Activated T-helper 1 cell treated with anti-CD3 and anti-CD28 coated beads, Interleukin-12 subunit alpha, Interleukin-12 subunit beta, Interleukin-2, Interleukin-4 antibody, amounts not matched to agents 30 ng/mL and 10 ng/mL and 1 ng/mL, durations not matched to agents 14 hours and 24 hours and 36 hours (primary cell): ENCODE measurements at regions of chr6 and their contacts with region 1.

Region 1: GRCh38 chr6:110815217-110816109 is at the start of gene CDK19:
- DNase-seq: peak; percentile 97
- H3K4me3 Mint-ChIP-seq: peak within 1 kb of the TSS; percentile 97
- H3K27ac Mint-ChIP-seq: peak within 1 kb of the TSS; percentile 98
- H3K4me1 Mint-ChIP-seq: peaks cover 38% of the 10 kb centered on the region
- H3K27me3 Mint-ChIP-seq: no peaks in the 10 kb centered on the region
- total RNA-seq, gene CDK19: 12.4 and 13.7 TPM in 2 replicates

Region 2: GRCh38 chr6:110528101-110528929 is 287.1 kb before region 1 on chr6:
- intact Hi-C with region 1: loop called (anchors 2 kb)
- DNase-seq: peak; percentile 24
- H3K4me3 Mint-ChIP-seq: no peak overlapping the region
- H3K27ac Mint-ChIP-seq: no peak overlapping the region
- H3K4me1 Mint-ChIP-seq: peaks cover 9% of the 10 kb centered on the region
- H3K27me3 Mint-ChIP-seq: peaks cover 8% of the 10 kb centered on the region

Region 3: GRCh38 chr6:110537208-110538123 is 278.0 kb before region 1 on chr6:
- intact Hi-C with region 1: loop called (anchors 2 kb)
- DNase-seq: no peak
- H3K4me3 Mint-ChIP-seq: peak overlapping the region; percentile 34
- H3K27ac Mint-ChIP-seq: peak overlapping the region; percentile 36
- H3K4me1 Mint-ChIP-seq: peaks cover 20% of the 10 kb centered on the region
- H3K27me3 Mint-ChIP-seq: peaks cover 16% of the 10 kb centered on the region

Region 4: GRCh38 chr6:110831405-110831804 is 15.9 kb after region 1 on chr6:
- intact Hi-C with region 1: no loop called
- DNase-seq: no peak
- H3K4me3 Mint-ChIP-seq: no peak overlapping the region
- H3K27ac Mint-ChIP-seq: no peak overlapping the region
- H3K4me1 Mint-ChIP-seq: no peaks in the 10 kb centered on the region
- H3K27me3 Mint-ChIP-seq: peaks cover 5% of the 10 kb centered on the region

Region 5: GRCh38 chr6:110944681-110945151 is 129.3 kb after region 1 on chr6:
- intact Hi-C with region 1: loop called (anchors 1 kb)
- DNase-seq: peak; percentile 40
- H3K4me3 Mint-ChIP-seq: no peak overlapping the region
- H3K27ac Mint-ChIP-seq: peak overlapping the region; percentile 80
- H3K4me1 Mint-ChIP-seq: peaks cover 11% of the 10 kb centered on the region
- H3K27me3 Mint-ChIP-seq: no peaks in the 10 kb centered on the region

Region 6: GRCh38 chr6:110958329-110959192 is 143.1 kb after region 1 on chr6 and contains the start of gene GTF3C6:
- intact Hi-C with region 1: loop called (anchors 1 kb)
- DNase-seq: peak; percentile 93
- H3K4me3 Mint-ChIP-seq: peak within 1 kb of the TSS; percentile 100
- H3K27ac Mint-ChIP-seq: peak within 1 kb of the TSS; percentile 99
- H3K4me1 Mint-ChIP-seq: peaks cover 16% of the 10 kb centered on the region
- H3K27me3 Mint-ChIP-seq: peaks cover 2% of the 10 kb centered on the region
- total RNA-seq, gene GTF3C6: 137 TPM in 2 replicates

Region 7: GRCh38 chr6:110981202-110981600 is 165.7 kb after region 1 on chr6:
- intact Hi-C with region 1: loop called (anchors 1 kb)
- DNase-seq: no peak
- H3K4me3 Mint-ChIP-seq: peak overlapping the region; percentile 99
- H3K27ac Mint-ChIP-seq: peak overlapping the region; percentile 98
- H3K4me1 Mint-ChIP-seq: peaks cover 14% of the 10 kb centered on the region
- H3K27me3 Mint-ChIP-seq: no peaks in the 10 kb centered on the region

Region 8: GRCh38 chr6:112087136-112087911 is 1271.9 kb after region 1 on chr6 and contains the starts of genes FAM229B and TUBE1:
- intact Hi-C with region 1: loop called (anchors 10 kb)
- DNase-seq: peak; percentile 86
- H3K4me3 Mint-ChIP-seq: no peak within 1 kb of the TSS
- H3K27ac Mint-ChIP-seq: no peak within 1 kb of the TSS
- H3K4me1 Mint-ChIP-seq: no peaks in the 10 kb centered on the region
- H3K27me3 Mint-ChIP-seq: peaks cover 14% of the 10 kb centered on the region
- total RNA-seq, gene FAM229B: 1.1 and 2.2 TPM in 2 replicates
- total RNA-seq, gene TUBE1: 24.4 and 26.2 TPM in 2 replicates